Breast epithelium (tissue), 4 donors: ENCODE measurements at regions of chr5 and their contacts with region 1.

Region 1: DNA sequence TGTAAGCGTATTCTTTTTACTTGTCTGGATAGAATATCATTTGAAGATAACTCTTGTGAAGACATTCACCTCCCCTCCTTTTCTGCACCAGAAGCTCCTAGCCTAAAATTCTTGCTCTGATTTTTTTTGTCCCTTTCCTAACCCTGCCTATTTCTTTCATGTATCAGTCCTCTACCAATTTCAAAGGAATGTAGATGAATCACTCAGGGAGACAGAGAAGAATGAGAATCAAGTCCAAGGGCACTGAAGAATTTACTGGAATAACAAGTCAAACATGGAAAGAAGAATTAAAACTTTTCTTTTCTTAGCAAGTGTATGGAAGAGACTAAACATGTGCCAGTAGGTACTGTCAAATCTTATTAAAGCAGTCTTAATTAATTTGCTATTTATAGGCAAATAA is 618.7 kb downstream of the DNAH5 start:
- DNase-seq: no peak
- H3K4me3 ChIP-seq: no peak overlapping the region
- H3K27ac ChIP-seq: no peak overlapping the region
- H3K4me1 ChIP-seq: no peaks in the 10 kb centered on the region
- H3K27me3 ChIP-seq: no peaks in the 10 kb centered on the region
- CTCF ChIP-seq: no peak
- POLR2A ChIP-seq: no peak

Region 2: DNA sequence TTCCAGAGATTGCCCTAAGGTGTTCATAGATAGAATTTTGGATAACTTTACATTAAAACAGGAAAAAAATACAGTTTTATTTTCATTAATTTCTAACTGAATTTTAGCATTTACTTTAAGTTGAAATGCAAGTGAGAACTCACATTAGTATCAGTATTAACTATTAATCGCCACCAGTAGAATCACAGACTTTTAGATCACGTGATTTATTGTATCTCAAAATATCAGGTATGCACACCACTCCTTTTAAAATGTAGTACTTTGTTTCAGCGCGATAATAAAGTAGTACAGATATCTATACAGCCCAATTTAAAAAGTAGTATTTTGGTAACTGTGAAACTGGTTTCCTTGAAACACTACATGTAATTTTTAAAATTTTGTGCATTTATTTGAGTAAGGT is 360.0 kb before region 1 on chr5:
- intact Hi-C with region 1: loop called (anchors 5 kb)
- DNase-seq: no peak
- H3K4me3 ChIP-seq: no peak overlapping the region
- H3K27ac ChIP-seq: no peak overlapping the region
- H3K4me1 ChIP-seq: no peaks in the 10 kb centered on the region
- H3K27me3 ChIP-seq: no peaks in the 10 kb centered on the region
- CTCF ChIP-seq: no peak
- POLR2A ChIP-seq: no peak

Region 3: DNA sequence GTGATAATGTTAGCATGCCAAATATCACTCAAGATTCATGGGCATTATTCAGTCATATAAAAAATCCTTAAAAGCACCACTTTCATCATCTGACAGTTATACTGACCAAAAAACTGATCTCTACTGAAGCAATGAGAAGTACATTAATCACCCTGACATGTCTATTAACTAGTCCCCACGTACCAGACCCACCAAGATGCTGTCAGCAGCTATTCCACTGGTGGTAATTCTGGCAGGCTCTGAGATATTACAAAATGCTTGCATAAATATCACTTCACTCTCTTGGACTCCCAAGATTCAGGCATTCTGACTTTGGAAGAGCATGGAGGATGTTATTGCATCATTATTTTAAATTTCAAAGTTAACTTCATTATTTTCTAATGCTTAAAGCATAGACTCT is 98.3 kb before region 1 on chr5:
- intact Hi-C with region 1: no loop called
- DNase-seq: no peak
- H3K4me3 ChIP-seq: no peak overlapping the region
- H3K27ac ChIP-seq: no peak overlapping the region
- H3K4me1 ChIP-seq: no peaks in the 10 kb centered on the region
- H3K27me3 ChIP-seq: no peaks in the 10 kb centered on the region
- CTCF ChIP-seq: no peak
- POLR2A ChIP-seq: no peak

Region 4: DNA sequence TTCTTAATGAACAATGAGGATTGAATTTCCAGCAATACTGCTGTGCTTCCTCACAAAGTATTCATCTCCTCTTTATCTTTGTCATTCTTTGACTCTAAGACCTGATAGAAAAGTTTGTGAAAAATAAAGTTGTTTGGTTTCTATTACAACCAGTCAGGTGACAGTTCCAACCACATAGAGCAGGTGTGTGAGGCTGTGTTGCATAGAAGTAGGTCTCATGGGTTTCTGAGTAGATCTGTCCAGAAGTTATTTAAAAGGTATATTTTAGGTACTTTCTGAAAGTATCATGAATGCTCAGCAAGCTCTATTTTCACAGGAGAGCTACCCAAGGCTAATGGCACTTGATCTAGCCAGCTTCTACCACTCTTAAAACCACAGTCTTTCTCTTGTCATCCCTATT is 18.3 kb before region 1 on chr5:
- intact Hi-C with region 1: no loop called
- DNase-seq: no peak
- H3K4me3 ChIP-seq: no peak overlapping the region
- H3K27ac ChIP-seq: no peak overlapping the region
- H3K4me1 ChIP-seq: no peaks in the 10 kb centered on the region
- H3K27me3 ChIP-seq: no peaks in the 10 kb centered on the region
- CTCF ChIP-seq: no peak
- POLR2A ChIP-seq: no peak

Region 5: DNA sequence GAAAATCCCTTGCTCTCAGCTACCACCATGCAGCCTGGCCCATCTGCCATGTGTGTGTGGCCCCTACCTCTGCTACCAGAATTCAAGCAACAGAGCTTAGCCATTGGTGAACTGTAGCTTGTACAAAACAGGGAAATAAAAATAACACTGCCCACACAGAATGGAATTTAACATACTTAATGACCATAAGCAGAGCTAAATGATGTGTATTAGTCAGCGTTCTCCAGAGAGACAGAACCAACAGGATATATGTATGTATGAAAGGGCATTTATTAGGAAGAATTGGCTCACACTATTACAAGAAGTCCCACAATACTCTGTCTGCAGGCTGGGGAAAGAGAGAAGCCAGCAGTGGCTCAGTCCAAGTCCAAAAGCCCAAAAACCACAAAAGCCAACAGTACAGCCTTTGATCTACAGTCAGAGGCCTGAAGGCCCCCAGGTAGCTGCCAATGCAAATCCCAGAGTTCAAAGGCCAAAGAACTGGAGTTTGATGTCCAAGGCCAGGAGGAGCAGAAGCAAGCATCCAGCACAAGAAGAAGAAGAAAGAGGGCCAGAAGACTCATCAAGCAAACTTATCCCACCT is 299.9 kb after region 1 on chr5:
- intact Hi-C with region 1: no loop called
- DNase-seq: no peak
- H3K4me3 ChIP-seq: no peak overlapping the region
- H3K27ac ChIP-seq: no peak overlapping the region
- H3K4me1 ChIP-seq: no peaks in the 10 kb centered on the region
- H3K27me3 ChIP-seq: no peaks in the 10 kb centered on the region
- CTCF ChIP-seq: no peak
- POLR2A ChIP-seq: no peak